ENCODE measurements at regions of chr4 and their contacts with region 1.

Region 1: GRCh38 chr4:3074078-3074795 is at the starts of genes HTT and HTT-AS:
- DNase-seq: peak; percentile 90
- H3K4me3 Mint-ChIP-seq: peak within 1 kb of the TSS; percentile 89
- H3K27ac Mint-ChIP-seq: peak within 1 kb of the TSS; percentile 90
- H3K4me1 Mint-ChIP-seq: peaks cover 27% of the 10 kb centered on the region
- H3K27me3 Mint-ChIP-seq: no peaks in the 10 kb centered on the region
- total RNA-seq, gene HTT: 65.9 and 66.9 TPM in 2 replicates
- total RNA-seq, gene HTT-AS: not detected in 2 replicates

Region 2: DNA sequence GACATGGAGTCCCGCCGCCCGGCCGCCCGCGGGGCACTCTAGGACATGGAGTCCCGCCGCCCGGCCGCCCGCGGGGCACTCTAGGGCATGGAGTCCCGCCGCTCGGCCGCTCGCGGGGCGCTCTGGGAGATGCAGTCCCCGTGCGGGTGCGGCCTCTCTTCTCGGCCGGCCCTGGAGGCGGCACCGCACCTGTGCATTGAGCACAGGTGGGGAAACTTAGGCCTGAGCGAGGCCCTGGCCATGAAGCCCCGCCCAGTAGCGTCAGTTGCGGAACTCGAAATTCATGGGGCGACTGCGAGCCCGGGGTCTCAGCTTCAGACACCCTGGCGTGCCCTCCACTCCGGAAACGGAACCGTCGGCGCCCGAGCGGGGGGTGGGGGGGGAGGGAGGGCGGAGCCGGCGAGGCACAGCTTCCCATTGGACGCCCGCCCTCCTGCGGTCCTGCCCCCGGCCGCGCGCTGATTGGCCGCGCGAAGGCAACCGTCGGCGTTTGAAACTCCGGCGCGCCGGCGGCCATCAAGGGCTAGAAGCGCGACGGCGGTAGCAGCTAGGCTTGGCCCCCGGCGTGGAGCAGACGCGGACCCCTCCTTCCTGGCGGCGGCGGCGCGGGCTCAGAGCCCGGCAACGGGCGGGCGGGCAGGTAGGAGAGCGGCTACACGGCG is 1353.1 kb before region 1 on chr4 and contains the starts of genes TACC3 and TMEM129:
- intact Hi-C with region 1: loop called (anchors 5 kb)
- DNase-seq: peak; percentile 90
- H3K4me3 Mint-ChIP-seq: peak within 1 kb of the TSS; percentile 94
- H3K27ac Mint-ChIP-seq: peak within 1 kb of the TSS; percentile 97
- H3K4me1 Mint-ChIP-seq: peaks cover 45% of the 10 kb centered on the region
- H3K27me3 Mint-ChIP-seq: no peaks in the 10 kb centered on the region
- total RNA-seq, gene TACC3: 134 and 139 TPM in 2 replicates
- total RNA-seq, gene TMEM129: 27.4 and 28.4 TPM in 2 replicates

Region 3: GRCh38 chr4:2418650-2419571 is 655.3 kb before region 1 on chr4 and contains the start of gene CFAP99:
- intact Hi-C with region 1: loop called (anchors 10 kb)
- DNase-seq: peak; percentile 94
- H3K4me3 Mint-ChIP-seq: peak within 1 kb of the TSS; percentile 85
- H3K27ac Mint-ChIP-seq: peak within 1 kb of the TSS; percentile 82
- H3K4me1 Mint-ChIP-seq: peaks cover 39% of the 10 kb centered on the region
- H3K27me3 Mint-ChIP-seq: peaks cover 55% of the 10 kb centered on the region
- total RNA-seq, gene CFAP99: not detected in 2 replicates

Region 4: DNA sequence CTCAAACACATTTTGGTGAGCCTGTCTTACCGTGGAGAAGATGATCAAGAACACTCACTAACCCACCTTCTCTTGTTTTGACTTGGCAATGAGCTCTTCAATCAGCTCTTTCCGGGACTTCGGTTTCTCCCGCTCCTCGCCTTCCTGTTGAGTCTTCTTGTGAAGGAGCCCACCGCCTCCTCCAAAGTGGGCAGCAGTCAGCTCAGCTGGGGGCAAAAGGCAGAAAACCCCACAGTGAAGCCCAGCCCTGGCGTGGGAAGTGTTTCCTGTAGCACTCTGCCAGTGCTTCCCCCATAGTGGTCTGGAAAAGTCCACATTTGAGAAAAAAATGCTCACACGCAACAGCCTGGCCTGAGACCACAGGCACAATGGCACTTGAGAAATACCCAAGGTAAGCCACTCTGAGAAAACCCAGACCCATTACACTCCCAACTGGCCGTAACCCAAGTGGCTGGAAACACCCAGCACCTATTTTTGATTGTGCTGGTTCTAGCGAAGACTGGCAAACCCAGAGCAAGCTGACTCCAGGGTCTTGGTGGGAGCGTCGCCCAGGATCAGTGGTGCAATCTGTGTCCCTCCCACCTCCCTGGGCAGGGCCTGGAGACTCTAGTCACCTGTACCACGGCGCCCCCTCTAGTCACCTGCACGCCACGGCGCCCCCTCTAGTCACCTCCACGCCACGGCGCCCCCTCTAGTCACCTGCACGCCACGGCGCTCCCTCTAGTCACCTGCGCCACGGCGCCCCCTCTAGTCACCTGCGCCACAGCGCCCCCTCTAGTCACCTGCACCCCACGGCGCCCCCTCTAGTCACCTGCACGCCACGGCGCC is 119.7 kb before region 1 on chr4:
- intact Hi-C with region 1: loop called (anchors 2 kb)
- DNase-seq: peak; percentile 64
- H3K4me3 Mint-ChIP-seq: peak overlapping the region; percentile 80
- H3K27ac Mint-ChIP-seq: peak overlapping the region; percentile 98
- H3K4me1 Mint-ChIP-seq: peaks cover 72% of the 10 kb centered on the region
- H3K27me3 Mint-ChIP-seq: no peaks in the 10 kb centered on the region

Region 5: DNA sequence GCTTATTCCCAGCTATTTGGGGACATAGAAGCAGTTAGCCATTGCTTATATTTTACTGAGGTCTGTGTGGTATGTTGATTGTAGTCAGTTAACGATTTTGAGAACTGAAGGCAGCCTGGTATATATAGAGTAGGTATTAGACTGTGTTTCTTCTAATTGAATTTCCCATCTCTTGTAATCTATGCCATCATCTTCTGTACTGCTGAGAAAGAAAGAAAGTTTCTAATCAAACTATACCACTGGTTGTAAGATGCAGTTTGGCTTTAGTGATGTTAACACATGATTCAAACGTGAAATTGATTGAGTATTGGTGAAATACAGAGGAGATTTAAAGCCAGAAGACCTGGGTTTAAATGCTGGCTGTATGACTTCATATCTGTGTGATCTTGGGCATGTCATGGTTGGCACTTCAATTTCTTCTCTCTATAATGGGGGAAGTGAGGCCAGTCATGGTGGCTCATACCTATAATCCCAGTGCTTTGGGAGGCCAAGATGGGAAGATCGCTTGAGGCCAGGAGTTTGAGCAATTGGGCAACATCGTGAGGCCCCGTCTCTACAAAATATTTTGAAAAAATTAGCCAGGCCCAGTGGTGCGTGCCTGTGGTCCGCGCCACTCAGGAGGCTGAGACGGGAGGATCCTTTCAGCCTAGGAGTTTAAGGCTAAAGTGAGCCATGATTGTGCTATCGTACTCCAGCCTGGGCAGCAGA is 11.9 kb after region 1 on chr4:
- intact Hi-C with region 1: loop called (anchors 1 kb)
- DNase-seq: no peak
- H3K4me3 Mint-ChIP-seq: no peak overlapping the region
- H3K27ac Mint-ChIP-seq: peak overlapping the region; percentile 80
- H3K4me1 Mint-ChIP-seq: peaks cover 58% of the 10 kb centered on the region
- H3K27me3 Mint-ChIP-seq: no peaks in the 10 kb centered on the region

Measured in activated T-helper 1 cell treated with anti-CD3 and anti-CD28 coated beads, Interleukin-12 subunit alpha, Interleukin-12 subunit beta, Interleukin-2, Interleukin-4 antibody, amounts not matched to agents 30 ng/mL and 10 ng/mL and 1 ng/mL, durations not matched to agents 14 hours and 24 hours and 36 hours (primary cell).